HCT116 (cell line): ENCODE measurements at regions of chr16 and their contacts with region 1.

Region 1: DNA sequence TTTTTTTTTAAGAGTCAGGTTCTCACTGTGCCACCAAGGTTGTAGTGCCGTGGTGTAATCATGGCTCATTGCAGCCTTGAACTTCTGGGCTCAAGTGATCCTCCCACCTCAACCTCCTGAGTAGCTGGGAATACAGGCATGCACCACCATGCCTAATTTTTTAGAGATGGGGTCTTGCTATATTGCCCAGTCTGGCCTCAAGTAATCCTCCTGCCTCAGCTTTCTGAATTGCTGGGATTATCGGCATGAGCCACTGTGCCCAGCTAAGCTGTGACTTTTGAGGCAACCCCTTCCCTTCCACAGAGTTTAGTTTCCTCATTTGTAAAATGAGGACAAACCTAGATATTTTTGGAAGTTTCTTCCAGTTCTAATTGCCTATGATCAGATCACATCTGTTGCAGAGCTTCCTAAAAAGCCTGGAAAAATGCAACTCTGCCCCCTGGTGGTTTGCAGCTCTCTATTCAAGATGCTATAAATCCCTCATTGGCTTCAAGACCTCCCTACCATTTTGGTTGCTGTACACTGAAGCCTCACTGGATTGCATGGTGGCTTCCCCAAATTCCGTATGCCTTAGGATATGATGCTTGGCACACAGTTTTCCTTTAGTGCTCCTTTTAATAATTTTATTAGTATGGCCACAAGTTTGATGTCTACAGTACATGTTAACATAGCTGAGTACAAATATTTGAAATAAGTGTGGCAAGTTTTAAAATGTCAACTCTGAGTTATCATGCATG is 19.3 kb downstream of the GDE1 start:
- DNase-seq: peak; percentile 73
- ATAC-seq: peak; percentile 95
- H3K4me3 ChIP-seq: no peak overlapping the region
- H3K27ac ChIP-seq: no peak overlapping the region
- H3K4me1 ChIP-seq: peaks cover 3 to 7% of the 10 kb centered on the region in 2 experiments; a peak in 2 of 4 replicates
- H3K27me3 ChIP-seq: no peaks in the 10 kb centered on the region
- CTCF ChIP-seq: peak; percentile 78 to 86 (median 81)
- POLR2A ChIP-seq: no peak
- RAD21 ChIP-seq: peak; percentile 90

Region 2: DNA sequence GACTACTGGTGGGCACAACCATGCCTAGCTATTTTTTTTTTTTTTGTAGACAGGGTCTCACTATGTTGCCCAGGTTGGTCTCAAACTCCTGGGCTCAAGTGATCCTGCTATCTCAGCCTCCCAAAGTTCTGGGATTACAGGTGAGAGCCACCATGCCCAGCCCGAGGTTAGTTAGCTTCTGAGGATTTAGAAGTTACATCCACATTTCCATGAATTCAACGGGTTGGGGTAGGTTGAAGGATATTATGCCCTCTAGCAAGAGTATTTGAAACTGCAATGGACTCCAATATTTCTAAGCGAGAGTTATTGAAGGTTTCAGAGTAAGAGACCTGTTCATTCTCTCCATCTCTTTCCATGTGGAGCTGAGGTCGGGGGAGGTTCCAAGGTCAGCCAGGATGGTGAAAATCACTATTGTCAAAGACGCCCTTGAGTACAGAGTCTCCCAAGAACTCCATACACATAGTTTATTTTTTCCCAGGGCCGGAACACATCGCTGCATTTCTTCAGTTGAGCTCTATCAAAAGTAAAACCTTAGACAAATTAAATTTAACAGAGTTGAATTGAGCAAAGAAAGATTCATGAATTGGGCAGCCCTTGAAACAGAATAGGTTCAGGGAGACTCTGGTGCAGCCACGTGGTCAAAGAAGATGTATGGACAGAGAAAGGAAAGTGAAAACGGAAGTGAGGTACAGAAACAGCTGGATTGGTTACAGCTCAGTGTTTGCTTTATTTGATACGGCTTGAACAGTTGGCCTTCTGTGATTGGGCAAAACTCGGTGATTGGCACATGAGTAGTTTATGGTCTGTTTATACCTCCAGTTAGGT is 407.8 kb before region 1 on chr16:
- CTCF ChIA-PET with region 1: interaction called, 10 read pairs
- POLR2A ChIA-PET with region 1: no interaction called
- RAD21 ChIA-PET with region 1: no interaction called
- intact Hi-C with region 1: no loop called
- DNase-seq: peak; percentile 56
- ATAC-seq: peak; percentile 76
- H3K4me3 ChIP-seq: no peak overlapping the region
- H3K27ac ChIP-seq: peak overlapping the region; percentile 78; the same call in 1 of the 2 replicates
- H3K4me1 ChIP-seq: peaks cover 24 to 42% of the 10 kb centered on the region in 2 experiments
- H3K27me3 ChIP-seq: no peaks in the 10 kb centered on the region
- CTCF ChIP-seq: peak in 2 of 3 experiments; percentile 8 to 33; a peak in 2 of 6 replicates
- POLR2A ChIP-seq: no peak
- RAD21 ChIP-seq: no peak

Region 3: GRCh38 chr16:19179546-19180490 is 322.7 kb before region 1 on chr16:
- CTCF ChIA-PET with region 1: interaction called, 18 read pairs
- POLR2A ChIA-PET with region 1: no interaction called
- RAD21 ChIA-PET with region 1: interaction called in 1 of 2 experiments, 3 read pairs
- intact Hi-C with region 1: no loop called
- DNase-seq: peak; percentile 31
- ATAC-seq: peak; percentile 95
- H3K4me3 ChIP-seq: no peak overlapping the region
- H3K27ac ChIP-seq: no peak overlapping the region
- H3K4me1 ChIP-seq: no peaks in the 10 kb centered on the region
- H3K27me3 ChIP-seq: no peaks in the 10 kb centered on the region
- CTCF ChIP-seq: peak; percentile 71 to 91 (median 82)
- POLR2A ChIP-seq: no peak
- RAD21 ChIP-seq: peak; percentile 67

Region 4: GRCh38 chr16:19419691-19420060 is 82.9 kb before region 1 on chr16:
- CTCF ChIA-PET with region 1: interaction called, 14 read pairs
- POLR2A ChIA-PET with region 1: interaction called, 4 read pairs
- RAD21 ChIA-PET with region 1: interaction called, 3 to 4 read pairs
- intact Hi-C with region 1: no loop called
- DNase-seq: peak; percentile 94
- ATAC-seq: peak; percentile 86
- H3K4me3 ChIP-seq: peak overlapping the region in 1 of 2 experiments; percentile 39; a peak in 3 of 4 replicates
- H3K27ac ChIP-seq: peak overlapping the region; percentile 73
- H3K4me1 ChIP-seq: peaks cover 20 to 63% of the 10 kb centered on the region in 2 experiments
- H3K27me3 ChIP-seq: no peaks in the 10 kb centered on the region
- CTCF ChIP-seq: no peak
- POLR2A ChIP-seq: no peak
- RAD21 ChIP-seq: peak; percentile 23; the same call in 1 of the 2 replicates

Region 5: DNA sequence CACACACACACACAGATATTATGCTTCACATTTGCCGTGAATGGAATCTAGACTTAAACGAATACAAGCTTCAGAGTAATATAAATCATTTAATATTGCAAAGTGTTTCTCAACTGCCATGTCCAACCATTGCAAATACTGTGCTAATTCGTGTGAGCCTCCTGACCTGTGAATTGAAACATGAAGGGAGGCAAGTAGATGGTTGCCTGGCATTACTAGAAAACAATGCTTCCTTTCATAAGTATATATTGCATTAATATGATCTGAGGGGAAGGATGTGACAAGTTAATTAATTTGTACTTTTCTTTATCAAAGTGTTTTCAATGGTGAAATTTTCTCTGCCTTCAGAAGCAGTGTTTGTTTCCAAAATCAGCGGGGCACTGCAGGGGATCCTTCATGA is 596.8 kb after region 1 on chr16:
- CTCF ChIA-PET with region 1: no interaction called
- POLR2A ChIA-PET with region 1: no interaction called
- RAD21 ChIA-PET with region 1: no interaction called
- intact Hi-C with region 1: no loop called
- DNase-seq: no peak
- ATAC-seq: no peak
- H3K4me3 ChIP-seq: no peak overlapping the region
- H3K27ac ChIP-seq: no peak overlapping the region
- H3K4me1 ChIP-seq: no peaks in the 10 kb centered on the region
- H3K27me3 ChIP-seq: peaks cover 56% of the 10 kb centered on the region
- CTCF ChIP-seq: no peak
- POLR2A ChIP-seq: no peak
- RAD21 ChIP-seq: no peak